Activated naive CD4-positive, alpha-beta T cell treated with anti-CD3 and anti-CD28 coated beads for 36 hours (primary cell): ENCODE measurements at regions of chr12 and their contacts with region 1.

Region 1: GRCh38 chr12:95511977-95512376 is 38.0 kb downstream of the METAP2 start:
- DNase-seq: no peak
- H3K4me3 Mint-ChIP-seq: no peak overlapping the region
- H3K27ac Mint-ChIP-seq: no peak overlapping the region
- H3K4me1 Mint-ChIP-seq: peaks cover 7% of the 10 kb centered on the region
- H3K27me3 Mint-ChIP-seq: no peaks in the 10 kb centered on the region

Region 2: GRCh38 chr12:95487024-95487423 is 25.0 kb before region 1 on chr12:
- CTCF ChIA-PET with region 1: no interaction called
- intact Hi-C with region 1: loop called (anchors 2 kb)
- DNase-seq: no peak
- H3K4me3 Mint-ChIP-seq: no peak overlapping the region
- H3K27ac Mint-ChIP-seq: no peak overlapping the region
- H3K4me1 Mint-ChIP-seq: peaks cover 5% of the 10 kb centered on the region
- H3K27me3 Mint-ChIP-seq: no peaks in the 10 kb centered on the region